Stomach (tissue), 19 donors: ENCODE measurements at regions of chrX and their contacts with region 1.

Region 1: DNA sequence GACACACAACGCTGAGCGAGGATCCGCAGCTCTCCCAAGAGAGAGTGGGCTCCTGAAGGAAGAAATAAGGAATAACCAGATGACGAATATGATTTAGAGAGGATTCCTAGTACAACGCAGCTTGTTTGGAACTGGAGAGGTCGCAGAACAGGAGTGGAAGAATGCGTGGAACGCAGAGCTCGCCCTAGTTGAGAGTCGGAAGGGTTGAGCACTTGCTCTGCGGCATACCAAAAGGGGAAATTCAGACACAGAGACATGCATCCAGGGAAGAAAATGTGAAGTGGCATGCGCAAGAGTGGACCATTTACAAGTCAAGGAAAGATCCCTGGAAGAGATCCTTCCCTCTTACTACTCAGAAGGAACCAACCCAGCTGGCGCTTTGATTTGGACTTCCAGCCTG is 6.3 kb downstream of the H2BW1 start:
- DNase-seq: no peak
- H3K4me3 ChIP-seq: no peak overlapping the region
- H3K27ac ChIP-seq: no peak overlapping the region
- H3K4me1 ChIP-seq: no peaks in the 10 kb centered on the region
- H3K27me3 ChIP-seq: peaks cover 0 to 47% (median 0%) of the 10 kb centered on the region in 3 donors
- CTCF ChIP-seq: no peak
- EP300 ChIP-seq: no peak
- POLR2A ChIP-seq: no peak

Region 2: GRCh38 chrX:103918581-103919269 is 88.5 kb before region 1 on chrX:
- intact Hi-C with region 1: loop called (anchors 2 kb)
- DNase-seq: peak; percentile 68 to 85
- H3K4me3 ChIP-seq: peak overlapping the region; percentile 54 to 61 (median 58)
- H3K27ac ChIP-seq: peak overlapping the region; percentile 2 to 84 (median 81)
- H3K4me1 ChIP-seq: peaks cover 0 to 8% (median 2%) of the 10 kb centered on the region in 4 donors
- H3K27me3 ChIP-seq: peaks cover 0 to 6% (median 0%) of the 10 kb centered on the region in 3 donors
- CTCF ChIP-seq: no peak
- EP300 ChIP-seq: no peak
- POLR2A ChIP-seq: no peak

Region 3: DNA sequence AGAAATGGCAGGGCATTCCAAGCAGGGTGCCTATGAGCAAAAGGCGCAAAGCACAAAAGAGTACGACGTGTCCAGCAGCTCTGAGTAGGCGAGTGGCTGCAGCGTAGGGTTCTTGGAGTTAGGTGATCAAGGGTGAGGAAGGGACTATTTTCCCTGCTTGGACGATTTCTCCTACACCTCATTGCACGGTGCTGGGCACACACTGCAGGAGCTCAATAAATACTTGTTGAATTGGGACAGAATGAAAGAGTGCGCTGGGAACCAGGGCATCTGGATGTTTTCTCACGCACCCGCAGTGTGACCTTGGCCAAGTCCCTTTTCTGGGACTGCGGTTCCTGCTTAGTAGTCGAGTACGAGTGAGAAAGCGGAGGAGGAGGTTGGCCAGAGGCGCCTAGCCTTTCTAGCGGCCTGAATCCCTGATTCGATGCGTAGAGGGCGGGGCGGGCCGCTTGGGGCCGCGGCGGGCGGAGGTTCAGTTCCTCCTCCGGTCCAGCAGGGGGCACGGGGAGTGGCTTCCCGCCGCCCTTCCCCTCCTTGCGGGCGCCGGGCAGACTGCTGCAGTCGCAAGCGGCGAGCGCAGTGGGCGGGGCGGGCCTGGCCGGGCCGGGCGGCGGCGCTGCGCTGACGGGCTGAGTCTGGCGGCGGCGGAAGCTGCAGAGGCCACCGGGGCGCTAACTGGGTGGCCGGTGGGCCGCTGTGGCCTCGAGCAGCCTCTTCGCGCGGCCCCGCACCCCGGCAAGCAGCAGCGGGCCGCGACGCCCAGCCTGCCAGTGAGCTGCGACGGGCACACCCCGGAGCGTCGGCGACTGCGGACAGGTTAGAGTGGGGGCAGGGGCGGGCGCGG is 158.9 kb after region 1 on chrX and contains the start of gene FAM199X:
- intact Hi-C with region 1: no loop called
- DNase-seq: peak; percentile 88 to 96
- H3K4me3 ChIP-seq: peak within 1 kb of the TSS; percentile 63 to 78 (median 73)
- H3K27ac ChIP-seq: peak within 1 kb of the TSS; percentile 81 to 92 (median 88)
- H3K4me1 ChIP-seq: peaks cover 3 to 29% (median 6%) of the 10 kb centered on the region in 4 donors
- H3K27me3 ChIP-seq: no peaks in the 10 kb centered on the region
- CTCF ChIP-seq: peak in 5 of 7 experiments; percentile 31 to 82 (median 68)
- EP300 ChIP-seq: no peak
- POLR2A ChIP-seq: no peak
- total RNA-seq, gene FAM199X: 16.3 to 41.3 (median 19.7) TPM